ENCODE measurements at regions of chr6 and their contacts with region 1.

Region 1: GRCh38 chr6:132483779-132484679 is 28.9 kb downstream of the STX7 start:
- DNase-seq: peak; percentile 76
- ATAC-seq: peak; percentile 84
- H3K4me3 ChIP-seq: no peak overlapping the region
- H3K27ac ChIP-seq: no peak overlapping the region
- H3K4me1 ChIP-seq: no peaks in the 10 kb centered on the region; the same call in 1 of the 2 replicates
- H3K27me3 ChIP-seq: no peaks in the 10 kb centered on the region
- CTCF ChIP-seq: peak; percentile 87
- POLR2A ChIP-seq: 0 out of 2 replicates have a peak, but pooled peaks have one; percentile 23
- RAD21 ChIP-seq: peak; percentile 91

Region 2: DNA sequence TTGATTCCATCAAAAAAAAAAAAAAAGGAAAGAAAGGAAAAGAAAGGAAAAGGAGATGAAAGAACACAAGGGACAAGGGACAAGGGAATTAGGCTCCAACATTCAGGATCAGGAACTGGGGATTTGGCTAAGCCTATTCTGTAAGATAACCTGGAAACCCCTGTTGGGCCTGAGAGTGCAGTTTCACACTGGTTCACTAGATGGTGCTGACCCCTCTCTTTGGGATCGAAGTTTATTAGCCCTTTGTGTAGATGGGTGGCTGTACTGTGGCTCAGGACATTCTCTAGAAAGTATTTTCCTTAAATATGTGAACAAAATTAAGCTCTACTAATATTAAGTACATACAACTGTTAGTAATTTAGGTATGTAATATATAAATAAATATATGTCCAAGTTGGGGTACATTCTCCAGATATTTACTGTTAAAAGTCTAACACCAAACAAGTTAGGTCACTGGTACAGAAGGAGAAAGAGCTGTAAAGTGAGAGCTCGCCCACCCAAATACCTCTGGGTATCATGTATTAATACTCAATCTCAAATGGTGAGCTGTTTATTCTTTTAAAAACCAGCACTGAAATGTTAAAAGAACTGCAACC is 789.1 kb before region 1 on chr6:
- CTCF ChIA-PET with region 1: no interaction called
- POLR2A ChIA-PET with region 1: no interaction called
- dilution Hi-C with region 1: no loop called
- in situ Hi-C with region 1: loop called (anchors 25 kb)
- intact Hi-C with region 1: no loop called
- DNase-seq: peak; percentile 79
- ATAC-seq: peak; percentile 100
- H3K4me3 ChIP-seq: no peak overlapping the region
- H3K27ac ChIP-seq: no peak overlapping the region
- H3K4me1 ChIP-seq: no peaks in the 10 kb centered on the region
- H3K27me3 ChIP-seq: no peaks in the 10 kb centered on the region; the same call in 1 of the 2 replicates
- CTCF ChIP-seq: peak; percentile 94
- POLR2A ChIP-seq: no peak
- RAD21 ChIP-seq: peak; percentile 96

Region 3: GRCh38 chr6:131914967-131915751 is 568.9 kb before region 1 on chr6:
- CTCF ChIA-PET with region 1: interaction called, 3 read pairs
- POLR2A ChIA-PET with region 1: no interaction called
- dilution Hi-C with region 1: no loop called
- in situ Hi-C with region 1: loop called (anchors 5 kb)
- intact Hi-C with region 1: loop called (anchors 2 kb)
- DNase-seq: peak; percentile 89
- ATAC-seq: peak; percentile 87
- H3K4me3 ChIP-seq: no peak overlapping the region
- H3K27ac ChIP-seq: no peak overlapping the region
- H3K4me1 ChIP-seq: peaks cover 3% of the 10 kb centered on the region
- H3K27me3 ChIP-seq: no peaks in the 10 kb centered on the region
- CTCF ChIP-seq: peak; percentile 89
- POLR2A ChIP-seq: no peak
- RAD21 ChIP-seq: peak; percentile 89